Transverse colon (tissue), 4 donors: ENCODE measurements at regions of chr15 and their contacts with region 1.

Region 1: DNA sequence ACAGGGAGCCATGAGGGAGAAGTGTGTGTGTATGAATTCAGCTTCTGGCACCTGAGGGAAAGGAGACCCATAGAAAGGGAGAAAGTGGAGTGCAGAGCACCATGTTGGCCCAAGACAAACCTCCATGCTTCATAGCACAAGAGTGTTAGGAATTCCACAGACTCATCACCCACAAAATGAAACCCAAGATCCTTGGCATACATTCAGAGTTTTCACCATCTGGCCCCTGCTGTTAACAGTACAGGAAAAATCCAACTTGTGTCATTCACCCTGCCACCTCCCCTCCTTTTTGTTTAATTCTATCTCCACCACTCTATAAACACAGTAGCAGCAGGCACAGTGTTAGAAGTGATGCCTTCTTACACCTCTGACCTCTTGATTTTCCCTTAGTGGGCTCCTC is 60.0 kb upstream of the MNS1 start:
- DNase-seq: no peak
- H3K4me3 ChIP-seq: no peak overlapping the region
- H3K27ac ChIP-seq: no peak overlapping the region
- H3K4me1 ChIP-seq: no peaks in the 10 kb centered on the region
- H3K27me3 ChIP-seq: no peaks in the 10 kb centered on the region
- CTCF ChIP-seq: no peak
- EP300 ChIP-seq: no peak
- POLR2A ChIP-seq: no peak

Region 2: GRCh38 chr15:56464893-56465520 is 59.9 kb before region 1 on chr15 and contains the start of gene MNS1:
- in situ Hi-C with region 1: no loop called
- intact Hi-C with region 1: loop called (anchors 10 kb)
- DNase-seq: peak; percentile 90
- H3K4me3 ChIP-seq: peak within 1 kb of the TSS; percentile 30 to 67 (median 46)
- H3K27ac ChIP-seq: peak within 1 kb of the TSS in 2 of 4 donors; percentile 5 to 23
- H3K4me1 ChIP-seq: peaks cover 6 to 15% (median 12%) of the 10 kb centered on the region in 4 donors
- H3K27me3 ChIP-seq: no peaks in the 10 kb centered on the region
- CTCF ChIP-seq: no peak
- EP300 ChIP-seq: no peak
- POLR2A ChIP-seq: no peak
- total RNA-seq, gene MNS1: 0.16 to 0.96 (median 0.40) TPM in 3 of 4 donors, not detected in the other

Region 3: DNA sequence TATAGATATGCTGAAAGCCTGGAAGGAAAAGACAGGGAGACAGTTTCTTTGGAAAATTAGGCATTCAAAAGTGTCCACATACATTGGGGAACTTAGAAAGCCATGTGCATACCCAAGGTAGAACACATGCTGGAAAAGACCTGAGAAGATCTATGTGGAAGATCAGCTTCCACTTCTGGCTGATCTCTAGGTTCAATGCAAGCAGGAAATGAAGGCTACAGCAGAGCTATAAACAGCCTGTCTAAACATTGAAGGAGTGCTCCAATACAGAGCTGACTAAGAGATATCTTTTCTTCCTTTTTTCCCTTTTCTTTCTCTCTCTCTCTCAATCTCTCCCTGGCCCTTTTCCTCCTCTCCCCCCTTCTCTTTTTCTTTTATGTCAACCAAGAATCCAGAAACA is 320.0 kb after region 1 on chr15:
- in situ Hi-C with region 1: no loop called
- intact Hi-C with region 1: loop called (anchors 10 kb)
- DNase-seq: no peak
- H3K4me3 ChIP-seq: no peak overlapping the region
- H3K27ac ChIP-seq: peak overlapping the region in 3 of 4 donors; percentile 44 to 57 (median 52)
- H3K4me1 ChIP-seq: peaks cover 0 to 11% (median 2%) of the 10 kb centered on the region in 4 donors
- H3K27me3 ChIP-seq: no peaks in the 10 kb centered on the region
- CTCF ChIP-seq: no peak
- EP300 ChIP-seq: no peak
- POLR2A ChIP-seq: no peak